Posterior cingulate gyrus (tissue), 11 donors: ENCODE measurements at regions of chr2 and their contacts with region 1.

Region 1: GRCh38 chr2:27086090-27086723 is 365 bp upstream of the KHK start:
- DNase-seq: peak; percentile 91 to 99 (median 96)

Region 2: DNA sequence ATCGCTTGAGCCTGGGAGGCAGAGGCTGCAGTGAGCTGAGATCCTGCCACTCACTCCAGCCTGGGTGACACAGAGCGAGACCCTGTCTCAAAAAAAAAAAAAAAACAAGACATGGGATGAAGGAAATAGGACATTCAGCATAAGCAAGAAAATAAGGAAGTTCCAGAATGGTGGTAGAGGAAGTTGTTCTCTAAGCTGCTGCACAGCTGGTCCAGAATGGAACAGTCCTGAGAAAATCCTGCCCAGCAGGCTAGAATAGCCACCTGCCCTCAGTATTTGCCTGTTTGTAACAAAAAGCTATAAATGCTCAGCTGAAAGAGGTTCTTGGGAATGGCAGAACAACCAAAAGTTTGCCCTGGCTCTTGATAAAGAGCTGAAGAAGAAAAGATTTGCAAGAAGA is 126.9 kb before region 1 on chr2:
- intact Hi-C with region 1: loop called (anchors 1 kb)
- DNase-seq: no peak

Region 3: DNA sequence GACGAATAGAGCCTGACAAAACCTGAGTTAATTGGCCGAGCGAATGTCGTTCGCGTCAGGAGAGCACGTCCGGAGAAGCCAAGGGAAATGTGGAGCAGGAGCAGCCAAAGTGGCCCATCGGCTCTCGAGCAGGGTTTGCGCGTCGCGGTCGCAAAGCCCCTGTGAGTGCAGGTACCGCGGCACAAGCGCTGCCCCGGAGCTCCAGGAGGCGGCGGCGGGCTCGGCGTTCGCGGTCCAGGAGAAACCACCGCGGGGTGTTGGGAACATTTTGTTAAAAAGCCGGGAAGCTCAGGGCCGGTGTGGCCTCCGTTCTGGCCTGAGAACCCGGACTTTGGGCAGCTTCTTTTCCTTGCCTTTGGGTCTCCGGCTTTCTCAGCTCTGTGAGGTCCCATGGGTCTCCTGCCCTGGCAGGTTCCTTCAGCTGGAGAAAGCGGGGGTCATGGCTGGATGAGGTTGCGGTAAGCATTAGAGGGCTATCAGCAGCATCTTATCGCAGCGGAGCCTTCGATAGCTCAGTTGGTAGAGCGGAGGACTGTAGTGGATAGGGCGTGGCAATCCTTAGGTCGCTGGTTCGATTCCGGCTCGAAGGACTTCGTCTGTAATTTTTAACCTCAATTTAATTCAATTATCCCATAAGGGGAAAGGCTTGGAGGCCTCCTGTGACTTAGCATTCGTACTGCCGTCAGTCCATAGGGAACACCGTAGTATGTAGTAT is 35.8 kb before region 1 on chr2:
- intact Hi-C with region 1: loop called (anchors 2 kb)
- DNase-seq: peak; percentile 89 to 99 (median 93)

Region 4: GRCh38 chr2:27133905-27134780 is 47.9 kb after region 1 on chr2 and contains the start of gene PREB:
- intact Hi-C with region 1: loop called (anchors 5 kb)
- DNase-seq: peak; percentile 90 to 99 (median 96)

Region 5: DNA sequence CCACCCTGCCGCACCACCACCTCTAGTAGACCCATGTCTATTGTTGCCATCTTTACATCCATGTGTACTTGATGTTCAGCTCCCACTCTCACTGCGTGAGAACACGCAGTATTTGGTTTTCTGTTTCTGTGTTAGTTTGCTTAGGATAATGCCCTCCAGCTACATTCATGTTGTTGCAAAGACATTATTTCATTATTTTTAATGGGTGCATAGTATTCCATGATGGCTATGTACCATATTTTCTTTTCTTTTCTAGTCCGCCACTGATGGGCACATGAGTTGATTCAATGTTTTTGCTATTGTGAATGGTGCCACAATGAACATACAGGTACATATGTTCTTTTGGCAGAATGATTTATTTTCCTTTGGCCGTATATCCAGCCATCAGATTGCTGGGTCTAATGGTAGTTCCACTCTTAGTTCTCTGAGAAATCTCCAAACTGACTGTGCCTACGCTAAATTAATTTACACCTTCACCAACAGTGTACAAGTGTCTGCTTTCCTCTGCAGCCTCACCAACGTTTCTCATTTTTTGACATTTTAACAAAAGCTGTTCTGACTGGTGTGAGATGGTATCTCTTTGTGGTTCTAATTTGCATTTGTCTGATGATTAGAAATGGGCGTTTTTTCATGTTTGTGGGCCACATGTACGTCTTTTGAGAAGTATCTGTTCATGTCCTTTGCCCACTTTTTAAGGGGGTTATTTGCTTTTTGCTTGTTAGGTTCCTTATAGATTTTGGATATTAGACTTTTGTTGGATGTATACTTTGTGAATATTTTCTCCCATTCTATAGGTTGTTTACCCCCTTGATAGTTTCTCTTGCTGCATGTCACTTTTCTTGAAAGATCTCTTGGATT is 304.8 kb after region 1 on chr2:
- intact Hi-C with region 1: no loop called
- DNase-seq: no peak